ENCODE measurements at regions of chr12 and their contacts with region 1.

Region 1: DNA sequence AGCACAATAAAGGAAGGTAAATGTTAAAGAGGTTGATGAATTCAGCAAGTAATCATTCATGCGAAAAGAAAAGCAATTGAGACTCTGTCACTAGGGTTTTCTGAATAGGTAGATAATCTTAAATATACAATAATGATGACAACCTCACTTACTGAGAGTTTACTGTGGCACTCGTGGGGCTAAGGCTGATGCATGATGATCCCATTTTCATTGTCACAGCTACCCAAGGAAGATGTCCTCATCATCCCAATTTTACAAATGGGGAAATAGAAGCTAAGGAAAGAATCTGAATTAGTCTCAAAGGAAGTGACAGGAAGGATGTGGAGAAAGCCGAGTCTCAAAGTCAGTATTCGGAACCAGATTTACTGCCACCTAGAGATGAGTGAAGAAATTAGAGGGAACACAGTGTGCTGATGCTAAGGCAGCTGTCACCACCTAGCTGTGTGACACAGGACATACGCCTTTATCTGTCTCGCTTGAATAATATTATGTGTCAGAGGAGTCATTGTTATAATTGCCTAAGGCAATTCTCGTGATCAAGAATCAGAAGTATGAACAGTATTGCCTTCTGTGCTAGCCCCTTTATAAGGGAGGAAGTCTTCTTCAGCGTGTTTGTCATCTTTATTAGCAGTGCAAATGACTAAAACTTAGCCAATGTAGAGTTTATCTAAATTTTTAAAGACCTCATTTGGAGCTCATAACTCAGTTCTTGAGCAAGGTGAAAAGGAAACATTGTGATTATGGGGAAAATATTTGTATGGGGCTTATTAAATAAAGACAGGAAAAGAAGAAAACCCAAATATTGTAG is 63.2 kb downstream of the ERGIC2 start:
- DNase-seq: no peak

Region 2: DNA sequence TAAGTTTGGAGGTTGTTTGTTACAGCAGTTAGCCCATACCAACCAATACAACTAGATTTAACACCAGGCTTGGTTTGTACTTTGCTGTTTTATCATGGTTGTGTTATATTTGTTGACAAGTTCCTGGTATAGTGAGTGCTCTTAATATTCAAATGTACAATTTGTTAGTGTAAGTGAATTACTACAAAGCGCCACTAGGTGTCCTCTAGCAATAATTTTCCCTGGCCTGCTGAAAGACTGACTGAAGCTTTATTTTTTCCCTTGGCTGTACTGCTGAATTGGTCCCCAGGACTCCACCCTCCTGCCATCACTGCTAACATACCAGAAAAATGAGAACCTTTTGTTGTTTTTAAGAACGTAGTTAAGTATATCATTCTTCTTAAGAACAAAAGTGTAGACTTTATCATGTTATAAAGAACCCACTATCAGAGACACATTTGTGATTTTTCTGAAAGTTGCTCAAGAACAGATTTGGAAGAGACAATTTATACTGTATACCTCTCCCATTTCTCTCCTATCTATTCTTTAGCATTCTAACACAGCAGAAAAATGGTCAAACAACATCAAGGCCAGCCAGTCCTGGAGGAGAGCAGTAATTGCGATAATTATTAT is 244.0 kb before region 1 on chr12:
- intact Hi-C with region 1: loop called (anchors 1 kb)
- DNase-seq: no peak

Region 3: DNA sequence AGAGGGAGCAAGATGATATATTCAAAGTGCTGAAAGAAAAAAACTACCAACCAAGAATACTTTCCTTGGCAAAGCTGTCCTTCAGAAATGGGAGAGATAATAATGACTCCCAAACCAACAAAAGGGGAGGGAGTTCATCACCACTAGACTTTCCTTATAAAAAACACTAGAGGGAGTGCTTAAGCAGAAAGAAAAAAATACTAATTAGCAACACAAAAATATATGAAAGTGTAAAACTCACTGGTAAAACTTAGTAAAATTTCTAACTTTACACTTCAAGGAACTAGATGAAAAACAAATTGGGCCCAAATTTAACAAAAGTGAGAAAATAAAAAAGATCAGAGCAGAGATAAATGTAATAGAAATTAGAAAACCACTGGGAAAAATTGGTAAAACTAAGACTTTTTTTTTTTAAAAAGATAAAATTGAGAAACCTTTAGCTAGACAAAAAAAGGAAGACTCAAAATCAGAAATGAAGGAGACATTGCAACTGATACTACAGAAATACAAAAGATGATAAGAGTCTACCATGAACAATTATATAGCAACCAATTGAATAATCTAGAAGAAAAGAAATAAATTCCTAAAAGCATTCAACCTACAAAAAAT is 229.0 kb before region 1 on chr12:
- intact Hi-C with region 1: loop called (anchors 5 kb)
- DNase-seq: no peak

Region 4: DNA sequence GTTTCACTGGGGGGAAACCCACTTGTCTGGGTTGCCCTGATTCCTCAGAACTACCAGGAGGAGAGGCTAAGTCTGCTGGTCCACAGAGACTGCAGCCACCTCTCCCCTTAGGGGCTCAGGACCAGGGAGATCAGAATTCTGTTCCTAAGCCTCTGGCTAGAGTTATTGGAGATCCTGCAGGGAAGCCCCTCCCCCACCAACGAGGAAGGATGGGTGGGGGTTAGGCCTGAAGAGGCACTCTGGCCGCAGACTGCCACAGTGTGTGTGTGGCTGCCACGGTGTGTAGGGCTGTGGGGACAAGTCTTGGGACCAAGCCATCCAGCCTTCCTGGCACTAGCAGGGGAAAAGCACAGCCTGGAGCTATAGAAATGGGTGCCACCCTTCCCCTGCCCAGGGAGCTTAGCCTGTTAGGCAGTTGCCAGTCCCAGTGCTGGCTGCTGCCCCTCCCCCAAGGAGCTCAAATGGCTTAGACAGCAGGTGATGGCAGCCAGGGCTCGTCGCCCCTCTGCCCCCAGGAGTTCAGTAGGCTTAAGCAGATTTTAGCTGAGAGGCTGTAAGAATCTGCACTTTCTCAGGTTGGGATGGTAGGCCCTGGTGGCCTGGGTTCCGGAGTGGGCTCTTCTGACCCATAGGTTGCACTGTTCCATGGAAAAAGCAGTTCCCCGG is 44.4 kb before region 1 on chr12:
- intact Hi-C with region 1: no loop called
- DNase-seq: no peak

Region 5: GRCh38 chr12:29380536-29381523 is 63.1 kb after region 1 on chr12 and contains the start of gene ERGIC2:
- intact Hi-C with region 1: loop called (anchors 5 kb)
- DNase-seq: peak; percentile 93
- total RNA-seq, gene ERGIC2: 84.1 TPM

Measured in cardiac septum (tissue), 1 donor.